IMR-90 (cell line): ENCODE measurements at regions of chr6 and their contacts with region 1.

Region 1: DNA sequence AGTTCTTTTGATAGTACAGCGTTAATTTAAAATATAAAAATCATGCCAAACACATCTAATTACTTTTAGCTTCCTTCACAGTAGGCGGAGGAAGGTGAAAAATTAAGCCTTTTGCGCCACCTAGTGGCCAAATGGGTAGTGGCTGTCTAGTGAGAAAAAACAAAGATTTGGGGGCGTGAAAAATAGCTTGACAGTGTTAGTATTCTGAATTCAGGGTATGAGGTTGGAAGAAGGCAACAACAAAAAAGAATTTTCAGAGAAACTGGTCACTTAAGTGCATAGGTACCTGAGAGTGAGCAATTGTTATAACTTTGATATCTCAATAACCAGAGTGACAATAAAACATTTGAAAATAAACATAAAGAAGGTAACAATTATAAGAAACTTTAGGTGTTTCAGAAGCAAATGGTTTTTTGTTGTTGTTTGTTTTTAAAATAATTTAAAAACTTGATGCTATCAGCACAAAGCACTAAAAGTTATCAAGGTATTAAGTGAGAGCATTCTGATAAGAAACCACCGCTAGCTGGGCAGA is 14.3 kb downstream of the PSMB9 start:
- DNase-seq: peak; percentile 65
- ATAC-seq: peak; percentile 90
- H3K4me3 ChIP-seq: no peak overlapping the region
- H3K27ac ChIP-seq: no peak overlapping the region
- H3K4me1 ChIP-seq: no peaks in the 10 kb centered on the region
- H3K27me3 ChIP-seq: peaks cover 19% of the 10 kb centered on the region
- CTCF ChIP-seq: peak; percentile 94
- POLR2A ChIP-seq: no peak
- RAD21 ChIP-seq: peak; percentile 83

Region 2: DNA sequence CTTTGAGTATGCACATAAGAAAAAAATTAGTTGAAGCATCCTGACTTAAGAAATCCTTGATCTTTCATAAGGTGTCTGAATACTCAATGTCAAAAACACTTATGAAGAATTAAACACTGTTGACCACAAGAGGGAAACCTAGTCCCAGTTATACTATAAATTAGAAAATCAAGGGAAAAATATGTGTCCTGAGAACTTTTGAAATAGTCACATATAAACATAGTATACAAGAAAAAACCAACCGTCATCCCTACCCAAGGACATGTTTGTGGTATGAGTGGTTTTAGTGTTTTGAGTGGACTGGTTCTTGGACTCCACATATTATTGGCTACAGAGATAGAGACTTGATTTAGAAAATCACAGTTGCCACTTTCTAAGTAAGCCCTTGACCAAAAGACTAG is 436.3 kb before region 1 on chr6:
- CTCF ChIA-PET with region 1: no interaction called
- POLR2A ChIA-PET with region 1: no interaction called
- dilution Hi-C with region 1: no loop called
- in situ Hi-C with region 1: no loop called
- intact Hi-C with region 1: loop called (anchors 5 kb)
- DNase-seq: peak; percentile 30
- ATAC-seq: no peak; the same call in 1 of the 2 replicates
- H3K4me3 ChIP-seq: no peak overlapping the region
- H3K27ac ChIP-seq: no peak overlapping the region
- H3K4me1 ChIP-seq: no peaks in the 10 kb centered on the region
- H3K27me3 ChIP-seq: no peaks in the 10 kb centered on the region; the same call in 1 of the 2 replicates
- CTCF ChIP-seq: peak; percentile 40
- POLR2A ChIP-seq: no peak
- RAD21 ChIP-seq: peak; percentile 21

Region 3: DNA sequence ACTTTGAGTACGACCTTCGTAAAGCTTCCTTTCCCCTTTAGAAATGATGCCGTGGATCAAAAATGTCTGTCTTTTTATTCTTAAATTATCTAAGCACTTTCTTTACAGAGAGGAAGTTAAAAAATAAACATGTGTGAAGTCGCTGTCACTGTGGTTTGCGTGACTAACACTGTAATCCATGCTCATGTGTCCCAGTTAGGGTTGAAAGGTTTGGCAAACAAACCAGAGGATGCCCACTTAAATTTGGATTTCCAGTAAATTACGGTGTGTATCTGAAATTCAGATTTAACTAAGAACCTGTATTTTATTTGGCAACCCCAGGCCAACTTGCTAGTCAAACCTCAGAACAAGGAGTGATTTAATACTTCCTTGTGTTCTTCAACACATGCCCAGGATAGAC is 299.8 kb before region 1 on chr6:
- CTCF ChIA-PET with region 1: no interaction called
- POLR2A ChIA-PET with region 1: no interaction called
- dilution Hi-C with region 1: no loop called
- in situ Hi-C with region 1: no loop called
- intact Hi-C with region 1: no loop called
- DNase-seq: no peak
- ATAC-seq: no peak
- H3K4me3 ChIP-seq: no peak overlapping the region
- H3K27ac ChIP-seq: no peak overlapping the region
- H3K4me1 ChIP-seq: no peaks in the 10 kb centered on the region
- H3K27me3 ChIP-seq: no peaks in the 10 kb centered on the region
- CTCF ChIP-seq: no peak
- POLR2A ChIP-seq: no peak
- RAD21 ChIP-seq: no peak

Region 4: GRCh38 chr6:32700391-32701040 is 167.8 kb before region 1 on chr6:
- CTCF ChIA-PET with region 1: no interaction called
- POLR2A ChIA-PET with region 1: no interaction called
- dilution Hi-C with region 1: no loop called
- in situ Hi-C with region 1: no loop called
- intact Hi-C with region 1: loop called (anchors 10 kb)
- DNase-seq: peak; percentile 59
- ATAC-seq: peak; percentile 93
- H3K4me3 ChIP-seq: no peak overlapping the region
- H3K27ac ChIP-seq: no peak overlapping the region
- H3K4me1 ChIP-seq: no peaks in the 10 kb centered on the region
- H3K27me3 ChIP-seq: peaks cover 2% of the 10 kb centered on the region
- CTCF ChIP-seq: peak; percentile 55
- POLR2A ChIP-seq: no peak
- RAD21 ChIP-seq: peak; percentile 54

Region 5: GRCh38 chr6:32838114-32838958 is 30.0 kb before region 1 on chr6 and contains the start of gene TAP2:
- CTCF ChIA-PET with region 1: interaction called, 38 read pairs
- POLR2A ChIA-PET with region 1: interaction called, 5 read pairs
- dilution Hi-C with region 1: no loop called
- in situ Hi-C with region 1: no loop called
- intact Hi-C with region 1: loop called (anchors 1 kb)
- DNase-seq: peak; percentile 89
- ATAC-seq: peak; percentile 96
- H3K4me3 ChIP-seq: peak within 1 kb of the TSS; percentile 89
- H3K27ac ChIP-seq: peak within 1 kb of the TSS; percentile 89
- H3K4me1 ChIP-seq: peaks cover 7% of the 10 kb centered on the region
- H3K27me3 ChIP-seq: no peaks in the 10 kb centered on the region
- CTCF ChIP-seq: peak; percentile 98
- POLR2A ChIP-seq: peak; percentile 58; the same call in 1 of the 2 replicates
- RAD21 ChIP-seq: peak; percentile 91
- total RNA-seq, gene TAP2: 6.6 and 8.1 TPM in 2 replicates

Region 6: DNA sequence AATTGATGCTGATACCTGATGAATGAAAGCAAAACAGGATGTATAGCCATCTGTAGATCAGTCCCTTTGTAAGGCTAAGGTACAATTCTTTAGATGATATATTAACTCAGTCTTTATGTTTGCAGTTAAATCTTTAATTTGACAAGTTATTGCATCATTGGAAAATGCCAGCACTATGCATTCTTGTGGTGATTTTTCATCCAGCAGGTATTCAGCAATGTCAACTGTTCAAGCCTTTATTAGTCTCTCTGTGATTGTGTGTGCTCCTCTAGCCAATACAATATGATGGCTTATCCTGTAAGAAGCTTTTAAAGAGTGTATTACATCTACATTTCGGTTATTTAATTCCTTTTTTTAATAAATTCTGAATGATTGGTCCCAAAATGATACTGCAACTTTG is 38.2 kb after region 1 on chr6:
- CTCF ChIA-PET with region 1: no interaction called
- POLR2A ChIA-PET with region 1: no interaction called
- dilution Hi-C with region 1: no loop called
- in situ Hi-C with region 1: no loop called
- intact Hi-C with region 1: no loop called
- DNase-seq: peak; percentile 74
- ATAC-seq: peak; percentile 67; the same call in 1 of the 2 replicates
- H3K4me3 ChIP-seq: no peak overlapping the region
- H3K27ac ChIP-seq: no peak overlapping the region
- H3K4me1 ChIP-seq: peaks cover 3% of the 10 kb centered on the region
- H3K27me3 ChIP-seq: no peaks in the 10 kb centered on the region; the same call in 1 of the 2 replicates
- CTCF ChIP-seq: no peak
- POLR2A ChIP-seq: no peak
- RAD21 ChIP-seq: no peak

Region 7: GRCh38 chr6:32984605-32985389 is 116.5 kb after region 1 on chr6:
- CTCF ChIA-PET with region 1: interaction called, 10 read pairs
- POLR2A ChIA-PET with region 1: no interaction called
- dilution Hi-C with region 1: no loop called
- in situ Hi-C with region 1: no loop called
- intact Hi-C with region 1: no loop called
- DNase-seq: peak; percentile 79
- ATAC-seq: peak; percentile 75
- H3K4me3 ChIP-seq: no peak overlapping the region
- H3K27ac ChIP-seq: no peak overlapping the region
- H3K4me1 ChIP-seq: no peaks in the 10 kb centered on the region
- H3K27me3 ChIP-seq: peaks cover 11% of the 10 kb centered on the region
- CTCF ChIP-seq: peak; percentile 93
- POLR2A ChIP-seq: no peak
- RAD21 ChIP-seq: peak; percentile 97